Activated T-helper 2 cell treated with anti-CD3 and anti-CD28 coated beads, Interferon-gamma antibody, Interleukin-2, Interleukin-4, amounts not matched to agents 10 μg/mL and 5 μg/mL and 100 μg/mL, durations not matched to agents 14 hours and 24 hours and 36 hours (primary cell): ENCODE measurements at regions of chr7 and their contacts with region 1.

Region 1: DNA sequence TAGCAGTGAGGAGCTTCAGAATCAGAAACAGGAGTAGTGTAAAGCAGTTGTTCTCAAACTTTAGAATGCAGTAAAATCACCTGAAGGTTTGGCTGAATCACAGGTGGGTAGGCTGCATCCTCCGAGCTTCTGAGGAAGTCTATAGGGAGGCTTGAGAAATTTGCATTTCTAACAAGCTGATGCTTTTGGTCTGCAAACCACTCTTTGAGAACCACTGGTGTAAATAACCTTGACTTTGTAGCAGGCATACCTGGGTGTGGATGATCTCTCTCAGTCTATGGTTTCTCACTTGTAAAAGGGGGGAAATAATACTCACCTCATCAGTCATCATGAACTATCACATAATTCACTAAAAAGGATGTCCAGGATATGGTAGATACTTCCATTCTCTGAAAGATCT is 118.1 kb downstream of the SRI start:
- DNase-seq: no peak
- H3K4me3 Mint-ChIP-seq: no peak overlapping the region
- H3K27ac Mint-ChIP-seq: peak overlapping the region; percentile 71
- H3K4me1 Mint-ChIP-seq: peaks cover 24% of the 10 kb centered on the region
- H3K27me3 Mint-ChIP-seq: no peaks in the 10 kb centered on the region

Region 2: DNA sequence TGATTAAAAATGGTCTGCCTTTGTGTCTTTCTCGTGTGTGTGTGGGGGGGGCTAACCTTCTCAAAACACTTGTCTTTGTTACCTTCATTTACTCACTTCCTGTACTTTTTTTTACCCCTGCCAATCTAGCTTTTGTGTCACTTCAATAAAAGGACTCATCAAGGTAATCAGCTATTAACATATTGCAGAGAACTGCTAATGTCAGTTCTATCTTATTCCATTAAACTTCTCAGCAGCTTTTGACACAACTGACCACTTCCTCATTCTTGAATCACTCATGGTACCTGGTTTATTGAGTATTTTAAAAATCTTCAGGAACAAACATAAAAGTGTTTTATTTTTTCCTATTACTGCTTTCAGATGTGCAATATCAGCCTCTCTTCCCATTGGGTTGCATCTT is 285.4 kb before region 1 on chr7:
- intact Hi-C with region 1: no loop called
- DNase-seq: no peak
- H3K4me3 Mint-ChIP-seq: no peak overlapping the region
- H3K27ac Mint-ChIP-seq: no peak overlapping the region
- H3K4me1 Mint-ChIP-seq: no peaks in the 10 kb centered on the region
- H3K27me3 Mint-ChIP-seq: peaks cover 3% of the 10 kb centered on the region

Region 3: GRCh38 chr7:87876040-87876868 is 225.5 kb before region 1 on chr7 and contains the starts of genes DBF4 and SLC25A40:
- intact Hi-C with region 1: loop called (anchors 5 kb)
- DNase-seq: peak; percentile 96
- H3K4me3 Mint-ChIP-seq: peak within 1 kb of the TSS; percentile 96
- H3K27ac Mint-ChIP-seq: peak within 1 kb of the TSS; percentile 97
- H3K4me1 Mint-ChIP-seq: peaks cover 49% of the 10 kb centered on the region
- H3K27me3 Mint-ChIP-seq: no peaks in the 10 kb centered on the region
- total RNA-seq, gene DBF4: 72.3 and 75.3 TPM in 2 replicates
- total RNA-seq, gene SLC25A40: 48.7 and 49.3 TPM in 2 replicates

Region 4: GRCh38 chr7:87933945-87934698 is 167.6 kb before region 1 on chr7 and contains the start of gene ADAM22:
- intact Hi-C with region 1: loop called (anchors 5 kb)
- DNase-seq: peak; percentile 77
- H3K4me3 Mint-ChIP-seq: peak within 1 kb of the TSS; percentile 91
- H3K27ac Mint-ChIP-seq: no peak within 1 kb of the TSS
- H3K4me1 Mint-ChIP-seq: peaks cover 7% of the 10 kb centered on the region
- H3K27me3 Mint-ChIP-seq: peaks cover 31% of the 10 kb centered on the region
- total RNA-seq, gene ADAM22: 3.7 and 4.0 TPM in 2 replicates

Region 5: GRCh38 chr7:88046839-88047573 is 54.8 kb before region 1 on chr7:
- intact Hi-C with region 1: loop called (anchors 5 kb)
- DNase-seq: no peak
- H3K4me3 Mint-ChIP-seq: no peak overlapping the region
- H3K27ac Mint-ChIP-seq: no peak overlapping the region
- H3K4me1 Mint-ChIP-seq: peaks cover 10% of the 10 kb centered on the region
- H3K27me3 Mint-ChIP-seq: no peaks in the 10 kb centered on the region

Region 6: GRCh38 chr7:88116235-88116795 is 14.5 kb after region 1 on chr7:
- intact Hi-C with region 1: no loop called
- DNase-seq: no peak
- H3K4me3 Mint-ChIP-seq: no peak overlapping the region
- H3K27ac Mint-ChIP-seq: no peak overlapping the region
- H3K4me1 Mint-ChIP-seq: peaks cover 2% of the 10 kb centered on the region
- H3K27me3 Mint-ChIP-seq: no peaks in the 10 kb centered on the region